ENCODE measurements at regions of chr1 and their contacts with region 1.

Region 1: GRCh38 chr1:212284744-212285684 is at the start of gene PPP2R5A:
- DNase-seq: peak; percentile 99
- H3K4me3 ChIP-seq: peak within 1 kb of the TSS; percentile 92 to 97 (median 92)
- H3K27ac ChIP-seq: peak within 1 kb of the TSS; percentile 99 to 100 (median 99)
- H3K4me1 ChIP-seq: peaks cover 11 to 22% of the 10 kb centered on the region in 2 donors
- H3K27me3 ChIP-seq: no peaks in the 10 kb centered on the region
- CTCF ChIP-seq: peak in 5 of 6 experiments; percentile 13 to 42 (median 34)
- POLR2A ChIP-seq: peak; percentile 47 to 96
- total RNA-seq, gene PPP2R5A: 62.7 to 81.5 (median 70.1) TPM

Region 2: DNA sequence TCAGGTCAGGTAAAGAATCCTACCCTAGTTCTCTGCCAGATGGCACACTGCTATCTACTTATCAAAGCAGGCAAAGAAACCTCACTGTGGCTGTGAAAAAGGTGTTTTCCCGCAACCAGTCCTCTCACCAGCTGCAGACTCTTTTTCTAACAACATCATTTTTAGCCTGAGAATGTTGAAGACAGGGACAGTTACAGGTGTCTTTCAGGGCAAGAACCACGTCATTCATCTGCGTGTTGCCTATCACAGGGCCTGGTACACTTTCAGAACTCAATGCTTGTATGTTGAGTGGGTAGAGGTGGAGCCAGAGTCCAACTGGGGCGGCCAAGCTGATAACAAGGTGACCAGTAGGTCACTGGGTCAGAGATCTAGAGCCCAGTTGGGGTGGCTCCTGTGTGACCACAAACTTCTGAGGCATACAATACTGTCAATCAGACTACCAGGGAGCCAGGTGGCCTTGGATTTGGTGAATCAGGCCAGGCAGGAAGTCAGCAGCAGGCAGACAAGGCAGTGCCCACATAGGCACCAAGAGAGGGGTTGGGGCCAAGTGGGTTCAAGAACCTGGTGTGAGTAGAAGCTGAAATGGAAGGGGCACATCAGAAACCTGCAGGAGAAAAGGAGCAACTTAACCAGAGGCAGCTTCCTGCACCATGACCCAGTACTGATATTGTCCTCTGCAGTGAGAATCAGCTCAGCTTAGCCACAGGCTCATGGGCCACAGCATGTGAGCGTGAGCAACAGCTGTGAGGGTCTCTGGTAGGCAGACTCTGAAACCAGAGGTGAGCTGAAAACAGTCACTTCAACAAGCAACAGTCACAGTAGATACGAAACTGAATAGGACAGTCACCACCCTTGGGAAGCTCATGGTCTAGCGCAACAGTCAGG is 125.9 kb before region 1 on chr1:
- intact Hi-C with region 1: loop called (anchors 10 kb)
- DNase-seq: no peak
- H3K4me3 ChIP-seq: no peak overlapping the region
- H3K27ac ChIP-seq: no peak overlapping the region
- H3K4me1 ChIP-seq: peaks cover 9 to 26% of the 10 kb centered on the region in 2 donors
- H3K27me3 ChIP-seq: no peaks in the 10 kb centered on the region
- CTCF ChIP-seq: no peak
- POLR2A ChIP-seq: no peak

Region 3: GRCh38 chr1:212234431-212235395 is 50.3 kb before region 1 on chr1:
- intact Hi-C with region 1: loop called (anchors 10 kb)
- DNase-seq: peak; percentile 76
- H3K4me3 ChIP-seq: no peak overlapping the region
- H3K27ac ChIP-seq: peak overlapping the region; percentile 70 to 90 (median 72)
- H3K4me1 ChIP-seq: peaks cover 57 to 67% of the 10 kb centered on the region in 2 donors
- H3K27me3 ChIP-seq: no peaks in the 10 kb centered on the region
- CTCF ChIP-seq: no peak
- POLR2A ChIP-seq: no peak